ENCODE measurements at regions of chr16 and their contacts with region 1.

Region 1: GRCh38 chr16:20849587-20850390 is 43.5 kb downstream of the REXO5 start:
- DNase-seq: peak; percentile 62 to 93 (median 78)
- H3K4me3 ChIP-seq: no peak overlapping the region
- H3K27ac ChIP-seq: peak overlapping the region in 4 of 5 donors; percentile 4 to 83 (median 56)
- H3K4me1 ChIP-seq: peaks cover 16 to 48% of the 10 kb centered on the region in 2 donors
- H3K27me3 ChIP-seq: no peaks in the 10 kb centered on the region
- CTCF ChIP-seq: peak; percentile 95 to 99 (median 98)
- POLR2A ChIP-seq: no peak

Region 2: GRCh38 chr16:20899477-20900298 is 49.9 kb after region 1 on chr16:
- intact Hi-C with region 1: loop called in 1 of 2 experiments (anchors 5 kb)
- DNase-seq: peak in 5 of 7 donors; percentile 26 to 71 (median 43)
- H3K4me3 ChIP-seq: peak overlapping the region; percentile 57 to 82 (median 70)
- H3K27ac ChIP-seq: peak overlapping the region; percentile 68 to 99 (median 95)
- H3K4me1 ChIP-seq: peaks cover 30 to 58% of the 10 kb centered on the region in 2 donors
- H3K27me3 ChIP-seq: no peaks in the 10 kb centered on the region
- CTCF ChIP-seq: no peak
- POLR2A ChIP-seq: no peak

Region 3: GRCh38 chr16:20944861-20945574 is 95.2 kb after region 1 on chr16:
- intact Hi-C with region 1: loop called (anchors 5 to 10 kb)
- DNase-seq: peak in 4 of 7 donors; percentile 10 to 52 (median 18)
- H3K4me3 ChIP-seq: no peak overlapping the region
- H3K27ac ChIP-seq: no peak overlapping the region
- H3K4me1 ChIP-seq: no peaks in the 10 kb centered on the region
- H3K27me3 ChIP-seq: no peaks in the 10 kb centered on the region
- CTCF ChIP-seq: peak in 3 of 6 experiments; percentile 11 to 23 (median 17)
- POLR2A ChIP-seq: no peak

Region 4: DNA sequence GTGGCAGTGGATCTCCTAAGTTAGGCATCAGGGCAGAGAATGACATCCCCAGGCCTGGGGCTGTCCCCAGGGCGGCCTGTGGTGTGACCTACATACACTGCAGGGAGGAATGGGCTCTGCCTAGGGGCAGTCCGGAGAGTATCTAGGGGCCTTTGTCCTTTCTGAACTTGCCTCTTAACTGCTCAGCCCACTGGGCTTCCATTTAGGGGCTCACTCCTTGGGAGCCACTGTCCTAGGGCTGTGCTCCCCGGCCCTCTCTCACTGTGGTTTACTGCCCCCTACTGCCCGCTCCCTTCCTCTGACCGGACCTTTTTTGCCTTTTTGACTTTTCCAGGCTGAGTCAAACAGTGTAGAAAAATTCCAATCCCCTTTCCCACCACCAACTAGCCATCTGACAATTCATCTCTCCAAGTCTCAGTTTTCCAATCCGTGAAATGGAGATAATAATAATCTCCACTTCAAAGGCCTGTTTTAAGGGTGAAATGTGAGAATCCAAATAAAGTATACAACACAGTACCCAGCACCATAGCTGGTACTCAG is 234.0 kb after region 1 on chr16:
- intact Hi-C with region 1: loop called (anchors 5 to 10 kb)
- DNase-seq: peak; percentile 52 to 82 (median 69)
- H3K4me3 ChIP-seq: no peak overlapping the region
- H3K27ac ChIP-seq: no peak overlapping the region
- H3K4me1 ChIP-seq: no peaks in the 10 kb centered on the region
- H3K27me3 ChIP-seq: no peaks in the 10 kb centered on the region
- CTCF ChIP-seq: peak; percentile 53 to 85 (median 77)
- POLR2A ChIP-seq: no peak

Region 5: DNA sequence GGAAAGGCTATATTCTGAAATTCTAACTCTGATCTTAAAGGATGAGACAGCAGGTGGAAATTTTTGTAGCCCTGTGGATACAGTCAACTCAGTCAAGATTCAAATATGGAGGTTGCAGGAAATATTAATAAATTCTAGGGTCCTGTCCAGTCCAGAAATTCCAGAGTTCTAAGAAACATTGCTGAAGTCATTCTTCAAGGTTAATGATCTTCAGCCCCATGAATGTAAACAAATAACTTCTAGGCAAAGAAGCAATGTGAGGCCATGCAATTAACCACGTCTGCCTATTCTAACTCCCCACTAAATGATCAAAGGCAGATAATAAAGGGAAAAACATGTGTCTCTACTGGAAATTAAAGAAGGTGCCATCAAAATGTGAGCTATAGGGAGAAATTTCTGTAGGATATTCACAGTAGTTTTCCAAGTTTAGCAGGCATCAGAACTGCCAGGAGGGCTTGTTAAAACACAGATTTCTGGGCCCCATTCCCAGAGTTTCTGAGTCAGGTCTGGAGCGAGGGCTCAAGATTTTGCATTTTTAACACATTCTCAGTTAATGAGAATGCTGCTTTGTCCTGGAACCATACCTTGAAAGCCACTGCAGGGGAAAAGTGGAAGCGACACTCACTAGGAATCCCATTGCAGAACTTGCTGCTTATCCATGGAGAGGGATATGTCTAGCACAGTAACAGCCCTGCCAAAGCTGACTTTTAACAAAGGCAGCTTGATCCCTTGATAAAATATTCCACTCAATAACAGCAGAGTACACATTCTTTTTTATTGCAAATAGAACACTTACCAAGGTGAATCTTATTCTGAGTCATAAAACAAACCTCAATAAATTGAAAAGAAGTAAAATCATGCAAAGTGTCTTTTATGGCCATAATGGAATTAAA is 239.1 kb after region 1 on chr16:
- intact Hi-C with region 1: loop called (anchors 5 to 10 kb)
- DNase-seq: no peak
- H3K4me3 ChIP-seq: no peak overlapping the region
- H3K27ac ChIP-seq: no peak overlapping the region
- H3K4me1 ChIP-seq: no peaks in the 10 kb centered on the region
- H3K27me3 ChIP-seq: peaks cover 6% of the 10 kb centered on the region
- CTCF ChIP-seq: no peak
- POLR2A ChIP-seq: no peak

Region 6: DNA sequence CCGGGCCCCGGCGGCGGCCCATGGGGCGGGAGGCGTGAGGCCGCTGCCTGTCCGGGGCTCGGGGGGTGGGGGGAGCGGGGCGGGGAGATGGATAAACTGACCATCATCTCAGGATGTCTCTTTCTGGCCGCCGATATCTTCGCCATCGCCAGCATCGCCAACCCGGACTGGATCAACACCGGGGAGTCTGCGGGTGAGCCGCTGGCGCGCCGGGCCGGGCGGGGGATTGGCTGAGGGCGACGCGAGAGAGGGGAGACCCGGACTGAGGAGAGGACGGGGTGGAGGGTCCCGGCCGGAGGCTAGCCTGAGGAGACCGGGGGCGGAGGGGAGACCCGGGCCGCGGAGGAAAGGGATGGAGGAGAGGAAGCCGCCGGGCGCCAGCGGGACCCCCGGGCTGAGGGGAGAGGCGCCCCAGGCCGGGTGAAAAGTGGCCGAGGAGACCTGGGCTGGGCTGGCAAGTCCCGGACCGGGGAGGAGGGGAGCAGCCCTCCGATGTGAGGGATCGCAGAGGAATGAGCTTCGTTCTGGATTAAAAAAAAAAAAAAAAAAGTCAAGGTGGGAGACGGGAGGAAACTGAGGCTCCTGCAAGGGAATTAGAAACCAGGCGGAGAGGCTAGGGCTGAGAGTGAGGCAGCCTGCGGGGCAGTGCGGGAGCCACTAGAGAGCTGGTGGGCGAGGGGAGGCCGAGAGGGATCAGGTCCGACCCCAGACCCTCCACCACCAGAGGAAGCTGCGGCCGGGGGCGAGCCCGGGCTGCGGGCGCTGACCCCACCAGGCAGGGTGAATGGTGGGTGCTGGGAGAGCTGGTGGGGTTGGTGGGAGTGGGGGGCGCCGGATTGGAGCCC is 1158.6 kb after region 1 on chr16:
- intact Hi-C with region 1: no loop called
- DNase-seq: peak in 6 of 7 donors; percentile 28 to 65 (median 39)
- H3K4me3 ChIP-seq: peak overlapping the region; percentile 53 to 99 (median 84)
- H3K27ac ChIP-seq: peak overlapping the region in 3 of 5 donors; percentile 52 to 94 (median 58)
- H3K4me1 ChIP-seq: peaks cover 16 to 41% of the 10 kb centered on the region in 2 donors
- H3K27me3 ChIP-seq: no peaks in the 10 kb centered on the region
- CTCF ChIP-seq: no peak
- POLR2A ChIP-seq: no peak